Tibial artery (tissue), 4 donors: ENCODE measurements at regions of chr1 and their contacts with region 1.

Region 1: DNA sequence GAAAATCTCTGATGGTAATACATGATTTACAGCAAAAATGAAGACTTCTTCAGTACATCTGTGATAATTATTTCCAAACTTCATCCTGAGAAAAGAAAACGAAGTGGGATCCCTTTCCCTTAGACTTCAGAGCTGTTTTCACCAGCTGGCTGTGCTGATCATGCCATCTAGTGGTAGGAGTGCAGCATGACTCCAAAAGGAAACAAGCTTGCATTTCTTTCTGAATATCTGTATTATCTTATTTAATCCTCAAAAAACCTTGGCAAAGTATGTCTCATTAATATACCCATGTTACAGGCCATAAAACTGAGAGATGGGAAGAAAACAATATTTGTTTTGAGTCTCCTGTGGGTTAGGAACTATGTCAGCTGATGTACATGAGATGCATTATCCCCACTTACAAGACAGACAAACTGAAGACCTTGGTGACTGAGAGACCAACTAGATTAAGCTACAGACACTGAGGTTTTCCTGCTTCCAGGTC is 9.8 kb upstream of the GJA8 start:
- DNase-seq: no peak
- H3K4me3 ChIP-seq: no peak overlapping the region
- H3K27ac ChIP-seq: no peak overlapping the region
- H3K4me1 ChIP-seq: peaks cover 0 to 14% (median 4%) of the 10 kb centered on the region in 4 donors
- H3K27me3 ChIP-seq: no peaks in the 10 kb centered on the region
- CTCF ChIP-seq: peak; percentile 93 to 95

Region 2: DNA sequence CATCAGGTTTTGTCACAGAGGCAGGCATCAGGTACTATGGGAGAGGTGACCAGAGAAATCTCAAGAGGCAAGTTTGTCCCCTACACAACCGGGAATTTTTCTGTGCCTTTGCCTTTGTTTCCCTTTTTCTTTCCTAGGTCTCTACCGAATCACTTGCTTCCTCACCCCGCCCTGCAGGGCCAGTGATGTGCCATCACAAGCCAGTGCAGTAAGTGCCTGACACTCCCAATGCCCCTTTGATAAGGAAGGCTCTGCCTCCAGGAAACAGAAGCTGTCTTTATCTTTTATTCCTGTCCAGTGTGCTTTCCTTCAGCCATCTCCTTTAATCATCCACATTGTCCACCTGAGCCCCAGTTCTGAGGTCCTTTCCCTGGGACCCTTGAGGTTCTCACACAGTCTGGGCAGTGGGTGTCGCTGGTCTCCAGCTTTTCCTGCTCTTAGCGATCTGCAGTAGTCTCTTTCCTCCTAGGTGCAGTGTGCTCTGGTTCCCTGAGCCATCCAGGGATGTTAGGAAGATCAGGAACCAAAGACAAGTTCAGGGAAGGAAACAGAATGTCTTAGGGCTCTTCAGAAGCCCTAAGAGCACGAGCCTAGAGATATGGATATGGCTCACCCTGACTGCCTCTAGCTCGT is 169.0 kb before region 1 on chr1:
- intact Hi-C with region 1: loop called (anchors 2 kb)
- DNase-seq: peak in 1 of 2 donors; percentile 68
- H3K4me3 ChIP-seq: no peak overlapping the region
- H3K27ac ChIP-seq: no peak overlapping the region
- H3K4me1 ChIP-seq: no peaks in the 10 kb centered on the region
- H3K27me3 ChIP-seq: no peaks in the 10 kb centered on the region
- CTCF ChIP-seq: peak; percentile 76 to 84

Region 3: DNA sequence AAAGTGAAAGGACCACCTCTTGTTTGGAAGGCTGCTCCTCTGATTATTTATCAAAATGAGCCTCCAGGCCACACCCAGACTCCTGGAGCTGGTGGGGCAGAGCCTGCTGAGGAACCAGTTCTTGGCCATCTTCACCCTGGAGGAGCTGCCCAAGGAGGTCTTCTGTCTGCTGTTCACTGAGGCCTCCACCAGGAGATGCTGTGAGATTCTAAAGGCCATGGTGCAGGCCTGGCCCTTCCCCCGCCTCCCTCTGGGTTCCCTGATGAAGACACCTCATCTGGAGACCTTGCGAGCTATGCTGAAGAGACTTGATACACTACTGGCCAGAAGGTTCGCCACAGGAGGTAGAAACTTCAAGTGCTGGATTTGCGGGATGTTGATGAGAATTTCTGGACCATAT is 51.9 kb before region 1 on chr1:
- intact Hi-C with region 1: no loop called
- DNase-seq: no peak
- H3K4me3 ChIP-seq: no peak overlapping the region
- H3K27ac ChIP-seq: no peak overlapping the region
- H3K4me1 ChIP-seq: no peaks in the 10 kb centered on the region
- H3K27me3 ChIP-seq: no peaks in the 10 kb centered on the region
- CTCF ChIP-seq: no peak

Region 4: DNA sequence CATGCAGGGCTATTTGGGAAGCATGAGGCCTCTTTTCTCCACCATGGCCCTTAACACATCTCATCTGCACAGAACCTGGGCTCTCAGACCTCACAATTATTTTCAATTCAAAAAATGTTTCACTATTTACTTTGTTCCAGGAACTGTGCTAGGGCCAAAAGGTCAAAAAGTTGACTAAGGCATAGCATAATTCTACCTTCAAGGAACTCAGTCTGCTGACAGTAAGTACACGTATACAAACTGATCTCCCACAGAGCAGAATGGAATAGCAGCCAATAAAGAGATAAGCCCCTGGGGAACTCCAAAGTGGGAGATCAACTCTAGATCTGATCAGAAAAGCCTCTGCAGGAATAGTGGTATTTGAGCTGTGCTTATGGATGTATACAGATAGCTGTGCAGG is 23.8 kb before region 1 on chr1:
- intact Hi-C with region 1: no loop called
- DNase-seq: no peak
- H3K4me3 ChIP-seq: no peak overlapping the region
- H3K27ac ChIP-seq: no peak overlapping the region
- H3K4me1 ChIP-seq: no peaks in the 10 kb centered on the region
- H3K27me3 ChIP-seq: no peaks in the 10 kb centered on the region
- CTCF ChIP-seq: no peak